ENCODE measurements at regions of chr6 and their contacts with region 1.

Region 1: DNA sequence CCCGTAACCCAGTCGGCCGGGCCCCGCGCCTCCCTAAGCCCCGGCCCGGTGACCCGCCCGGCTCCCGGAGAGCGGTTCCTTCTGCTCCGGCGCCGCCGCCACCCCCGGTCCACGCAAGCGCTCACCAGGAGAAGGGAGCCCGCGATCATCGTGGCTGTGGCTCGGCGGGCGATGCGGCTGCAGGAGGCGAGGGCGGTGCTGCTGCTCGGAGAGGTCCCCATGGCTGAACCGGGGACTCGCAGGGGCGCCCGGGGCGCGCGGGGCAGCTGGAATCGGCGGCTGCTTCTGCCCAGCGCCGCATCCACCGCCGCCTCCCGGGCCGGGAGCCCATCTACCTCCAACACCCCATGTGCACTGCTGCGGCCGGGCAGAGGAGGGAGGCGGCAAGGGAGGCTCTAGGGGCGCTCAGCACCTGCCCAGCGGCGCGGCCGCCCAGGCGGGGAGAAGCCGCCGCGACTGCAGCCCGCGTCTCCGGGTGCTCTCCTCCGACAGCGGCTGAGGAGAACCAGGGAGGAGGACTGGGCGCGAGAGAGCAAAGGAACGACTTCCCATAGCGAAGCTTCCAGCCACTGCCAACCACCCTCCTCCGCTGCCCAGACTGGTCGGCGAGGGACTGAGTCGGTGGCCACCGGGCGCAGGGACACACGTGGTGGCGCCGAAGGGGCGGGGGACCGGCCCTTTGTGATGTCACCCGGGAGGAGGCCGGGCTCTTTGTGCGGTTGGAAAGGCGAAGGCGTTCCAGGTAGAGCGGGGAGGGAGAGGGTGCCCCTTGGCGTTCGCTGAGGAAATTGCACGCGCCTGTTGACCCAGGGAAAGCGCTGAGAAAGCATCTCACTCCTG is at the start of gene TNFRSF21:
- DNase-seq: peak; percentile 95 to 97 (median 96)
- ATAC-seq: peak; percentile 99
- H3K4me3 ChIP-seq: peak within 1 kb of the TSS; percentile 61
- H3K27ac ChIP-seq: no peak within 1 kb of the TSS
- H3K4me1 ChIP-seq: peaks cover 0 to 15% of the 10 kb centered on the region in 2 experiments; a peak in 3 of 5 replicates
- H3K27me3 ChIP-seq: peaks cover 11 to 15% of the 10 kb centered on the region in 2 experiments
- CTCF ChIP-seq: peak; percentile 96 to 99 (median 99)
- EP300 ChIP-seq: peak; percentile 27
- POLR2A ChIP-seq: peak; percentile 63
- RAD21 ChIP-seq: peak; percentile 99
- polyA plus RNA-seq, gene TNFRSF21: 0.63 to 0.67 TPM

Region 2: GRCh38 chr6:47242483-47243386 is 66.8 kb before region 1 on chr6:
- CTCF ChIA-PET with region 1: no interaction called
- POLR2A ChIA-PET with region 1: no interaction called
- in situ Hi-C with region 1: no loop called
- intact Hi-C with region 1: loop called (anchors 2 kb)
- DNase-seq: peak; percentile 85 to 98 (median 91)
- ATAC-seq: peak; percentile 98
- H3K4me3 ChIP-seq: no peak overlapping the region; the same call in 1 of the 2 replicates
- H3K27ac ChIP-seq: peak overlapping the region; percentile 79
- H3K4me1 ChIP-seq: peaks cover 7 to 45% of the 10 kb centered on the region in 2 experiments; a peak in 4 of 5 replicates
- H3K27me3 ChIP-seq: no peaks in the 10 kb centered on the region
- CTCF ChIP-seq: no peak; a peak in 1 of 6 replicates
- EP300 ChIP-seq: peak; percentile 93
- POLR2A ChIP-seq: peak; percentile 63
- RAD21 ChIP-seq: no peak; a peak in 2 of 4 replicates